ENCODE measurements at regions of chr5 and their contacts with region 1.

Region 1: DNA sequence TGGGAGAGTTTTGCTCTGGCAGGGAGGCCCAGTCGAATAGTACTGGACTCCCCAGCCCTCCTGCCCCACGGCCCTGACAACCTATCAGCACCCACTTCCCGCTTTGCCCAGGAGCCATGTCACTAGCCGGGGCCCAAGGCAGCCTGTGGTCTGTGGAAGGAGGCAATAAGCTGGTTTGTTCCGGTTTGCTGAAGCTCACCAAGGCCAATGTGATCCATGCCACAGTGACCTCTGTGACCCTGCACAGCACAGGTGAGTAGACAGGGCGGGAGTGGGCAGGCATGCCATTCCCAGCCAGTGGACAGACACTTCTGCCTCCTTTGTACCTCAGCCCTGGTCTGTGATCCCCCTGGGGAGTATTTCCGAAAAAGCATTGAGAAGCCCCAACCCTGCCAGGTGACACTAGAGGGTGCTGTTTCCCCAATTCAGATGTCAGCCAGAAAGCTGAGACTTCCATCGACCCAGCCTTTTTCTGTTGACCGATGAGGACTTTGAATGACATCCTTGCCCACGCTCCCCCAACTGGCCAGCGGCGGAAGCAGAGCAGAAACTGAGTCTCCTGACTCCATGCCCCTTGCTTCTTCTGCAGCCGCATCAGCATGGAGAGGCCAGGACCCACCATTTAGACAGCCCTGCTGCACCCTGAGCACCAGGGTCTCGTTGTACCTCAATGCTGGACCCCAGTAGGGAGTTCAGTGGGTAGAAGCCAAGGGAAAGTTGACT is 9.6 kb downstream of the PCYOX1L start:
- DNase-seq: peak; percentile 53 to 76 (median 68)
- H3K4me3 ChIP-seq: no peak overlapping the region
- H3K27ac ChIP-seq: no peak overlapping the region
- H3K4me1 ChIP-seq: no peaks in the 10 kb centered on the region
- H3K27me3 ChIP-seq: no peaks in the 10 kb centered on the region
- CTCF ChIP-seq: peak; percentile 61 to 64 (median 62)
- EP300 ChIP-seq: no peak
- POLR2A ChIP-seq: no peak

Region 2: GRCh38 chr5:149559712-149560111 is 192.3 kb after region 1 on chr5:
- intact Hi-C with region 1: loop called in 1 of 4 experiments (anchors 5 kb)
- DNase-seq: no peak
- H3K4me3 ChIP-seq: no peak overlapping the region
- H3K27ac ChIP-seq: no peak overlapping the region
- H3K4me1 ChIP-seq: peaks cover 12% of the 10 kb centered on the region
- H3K27me3 ChIP-seq: no peaks in the 10 kb centered on the region
- CTCF ChIP-seq: no peak
- EP300 ChIP-seq: no peak
- POLR2A ChIP-seq: no peak

Region 3: DNA sequence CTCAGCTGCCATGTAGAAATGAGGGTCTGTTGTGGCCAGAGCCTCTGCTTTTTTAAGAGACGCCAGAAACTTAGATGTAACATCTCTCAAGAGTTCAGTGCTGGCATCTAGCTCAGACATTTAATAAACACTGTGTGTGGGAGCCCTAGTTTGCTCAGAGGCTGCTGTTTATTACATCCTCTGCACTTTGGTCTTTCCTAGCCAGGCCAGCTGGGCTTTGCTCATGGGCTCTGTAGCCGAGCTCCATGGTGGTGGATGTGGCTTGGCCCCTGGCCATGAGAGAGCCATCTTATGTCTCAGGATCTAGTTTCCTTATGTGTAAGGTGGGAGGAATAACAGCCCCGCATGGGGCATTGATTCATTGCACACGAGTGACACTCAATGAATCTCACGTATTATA is 243.9 kb after region 1 on chr5:
- intact Hi-C with region 1: no loop called
- DNase-seq: peak in 4 of 5 donors; percentile 41 to 75 (median 46)
- H3K4me3 ChIP-seq: no peak overlapping the region
- H3K27ac ChIP-seq: no peak overlapping the region
- H3K4me1 ChIP-seq: no peaks in the 10 kb centered on the region
- H3K27me3 ChIP-seq: no peaks in the 10 kb centered on the region
- CTCF ChIP-seq: no peak
- EP300 ChIP-seq: no peak
- POLR2A ChIP-seq: no peak

Region 4: GRCh38 chr5:150217873-150218692 is 850.7 kb after region 1 on chr5:
- intact Hi-C with region 1: no loop called
- DNase-seq: peak; percentile 78 to 90 (median 88)
- H3K4me3 ChIP-seq: no peak overlapping the region
- H3K27ac ChIP-seq: no peak overlapping the region
- H3K4me1 ChIP-seq: peaks cover 2% of the 10 kb centered on the region
- H3K27me3 ChIP-seq: no peaks in the 10 kb centered on the region
- CTCF ChIP-seq: peak; percentile 64 to 96 (median 95)
- EP300 ChIP-seq: no peak
- POLR2A ChIP-seq: no peak

Measured in ovary (tissue), 10 donors.